ENCODE measurements at regions of chr4 and their contacts with region 1.

Region 1: DNA sequence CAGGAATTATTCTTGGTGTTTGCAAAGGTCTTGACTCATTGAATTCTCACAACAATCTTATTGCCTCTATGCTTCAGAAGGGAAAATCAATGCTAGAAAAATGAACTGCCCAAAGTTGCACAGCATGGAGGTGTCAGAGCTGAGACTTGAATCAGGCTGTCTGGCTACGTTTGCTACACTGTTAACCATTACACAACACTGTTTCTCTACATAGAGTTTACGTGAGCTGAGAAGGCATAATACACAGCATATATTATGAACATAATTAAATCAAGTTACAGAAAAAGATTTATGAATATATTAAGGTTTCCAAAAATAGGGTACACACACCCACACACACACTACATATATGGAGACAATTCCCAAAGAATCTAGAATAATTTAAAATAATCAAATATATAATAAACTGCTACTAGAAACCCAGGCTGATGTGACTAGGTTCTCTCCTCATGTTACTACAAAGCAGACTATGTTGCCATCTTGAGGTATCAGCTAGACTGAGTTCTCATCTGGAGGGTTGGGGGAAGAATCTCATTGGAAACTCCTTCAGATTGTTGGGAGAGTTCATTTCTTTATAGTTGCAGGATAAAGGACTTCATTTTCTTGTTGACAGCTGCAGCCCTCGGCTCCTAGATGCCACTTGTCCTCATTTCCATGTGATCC is 1270.5 kb downstream of the ARAP2 start:
- DNase-seq: no peak
- ATAC-seq: peak; percentile 87
- H3K4me3 ChIP-seq: peak overlapping the region in 1 of 4 donors; percentile 3
- H3K27ac ChIP-seq: peak overlapping the region; percentile 67 to 83 (median 80)
- H3K4me1 ChIP-seq: peaks cover 11 to 12% of the 10 kb centered on the region in 2 donors
- H3K27me3 ChIP-seq: no peaks in the 10 kb centered on the region
- CTCF ChIP-seq: peak in 1 of 5 experiments; percentile 12
- POLR2A ChIP-seq: no peak

Region 2: DNA sequence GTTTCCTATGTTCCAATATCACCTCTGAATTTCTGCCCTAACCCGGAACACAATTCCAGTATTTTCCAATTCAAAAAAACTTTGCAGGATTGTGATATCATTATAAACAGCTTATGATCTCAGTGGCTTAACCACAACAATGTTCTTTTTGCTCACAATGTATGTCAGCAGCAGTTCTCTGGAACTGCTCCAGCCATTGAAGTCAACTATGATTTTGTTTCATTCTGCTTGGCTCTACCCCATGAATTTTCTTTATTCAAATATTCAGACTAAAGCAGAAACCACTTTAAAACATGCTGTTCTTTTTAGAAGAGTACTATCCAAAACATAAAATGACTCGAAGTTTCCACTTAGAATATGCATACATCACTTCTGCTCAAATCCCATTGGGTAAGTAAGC is 340.5 kb before region 1 on chr4:
- in situ Hi-C with region 1: no loop called
- intact Hi-C with region 1: no loop called
- DNase-seq: no peak
- ATAC-seq: no peak
- H3K4me3 ChIP-seq: no peak overlapping the region
- H3K27ac ChIP-seq: no peak overlapping the region
- H3K4me1 ChIP-seq: peaks cover 0 to 14% of the 10 kb centered on the region in 2 donors
- H3K27me3 ChIP-seq: no peaks in the 10 kb centered on the region
- CTCF ChIP-seq: no peak
- POLR2A ChIP-seq: no peak

Region 3: DNA sequence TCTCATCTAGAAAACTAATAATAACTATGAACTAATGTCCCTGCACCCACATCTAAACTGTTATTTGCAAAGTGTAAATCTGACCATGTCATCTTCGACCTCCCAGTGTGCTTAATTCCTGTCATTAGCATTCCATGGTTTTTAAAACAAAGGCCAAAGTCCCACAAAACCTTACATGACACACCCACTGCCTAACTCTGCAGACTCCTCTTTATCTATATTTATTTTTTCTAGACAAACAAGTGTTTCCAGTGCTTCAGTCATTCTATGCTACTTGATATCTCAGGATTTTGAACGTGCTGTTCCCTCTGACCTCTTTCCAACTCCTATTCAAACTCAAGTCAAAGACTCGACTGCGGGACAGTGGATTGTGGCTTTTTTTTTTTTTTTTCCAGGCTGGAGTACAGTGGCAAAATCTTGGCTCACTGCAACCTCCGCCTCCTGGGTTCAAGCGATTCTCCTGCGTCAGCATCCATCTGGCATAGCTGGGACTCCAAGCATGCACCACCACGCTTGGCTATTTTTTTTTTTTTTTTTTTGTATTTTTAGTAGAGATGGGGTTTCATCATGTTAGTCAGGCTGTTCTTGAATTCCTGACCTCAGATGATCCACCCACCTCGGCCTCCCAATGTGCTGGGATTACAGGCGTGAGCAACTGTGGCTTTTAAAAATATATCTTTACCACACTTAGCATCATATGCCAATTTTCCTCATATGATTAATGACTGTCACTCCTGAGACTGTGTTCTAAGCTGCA is 240.4 kb before region 1 on chr4:
- in situ Hi-C with region 1: no loop called
- intact Hi-C with region 1: loop called (anchors 2 kb)
- DNase-seq: peak; percentile 17 to 84
- ATAC-seq: peak; percentile 92 to 93
- H3K4me3 ChIP-seq: no peak overlapping the region
- H3K27ac ChIP-seq: peak overlapping the region; percentile 75 to 85 (median 82)
- H3K4me1 ChIP-seq: peaks cover 8 to 17% of the 10 kb centered on the region in 2 donors
- H3K27me3 ChIP-seq: no peaks in the 10 kb centered on the region
- CTCF ChIP-seq: no peak
- POLR2A ChIP-seq: no peak

Region 4: GRCh38 chr4:34943741-34944386 is 29.9 kb before region 1 on chr4:
- in situ Hi-C with region 1: no loop called
- intact Hi-C with region 1: loop called (anchors 2 kb)
- DNase-seq: no peak
- ATAC-seq: peak; percentile 96 to 99
- H3K4me3 ChIP-seq: peak overlapping the region in 2 of 4 donors; percentile 4 to 27
- H3K27ac ChIP-seq: peak overlapping the region; percentile 74 to 82 (median 78)
- H3K4me1 ChIP-seq: peaks cover 0 to 10% of the 10 kb centered on the region in 2 donors
- H3K27me3 ChIP-seq: no peaks in the 10 kb centered on the region
- CTCF ChIP-seq: no peak
- POLR2A ChIP-seq: no peak

Region 5: GRCh38 chr4:35080799-35081198 is 107.0 kb after region 1 on chr4:
- in situ Hi-C with region 1: no loop called
- intact Hi-C with region 1: no loop called
- DNase-seq: no peak
- ATAC-seq: no peak
- H3K4me3 ChIP-seq: no peak overlapping the region
- H3K27ac ChIP-seq: no peak overlapping the region
- H3K4me1 ChIP-seq: no peaks in the 10 kb centered on the region
- H3K27me3 ChIP-seq: no peaks in the 10 kb centered on the region
- CTCF ChIP-seq: no peak
- POLR2A ChIP-seq: no peak

Measured in gastrocnemius medialis (tissue), 4 donors.